Activated CD8-positive, alpha-beta memory T cell treated with anti-CD3 and anti-CD28 coated beads, Interleukin-2, amount 10 ng/mL, durations not matched to agents 7 days and 5 days (primary cell): ENCODE measurements at regions of chr19 and their contacts with region 1.

Region 1: DNA sequence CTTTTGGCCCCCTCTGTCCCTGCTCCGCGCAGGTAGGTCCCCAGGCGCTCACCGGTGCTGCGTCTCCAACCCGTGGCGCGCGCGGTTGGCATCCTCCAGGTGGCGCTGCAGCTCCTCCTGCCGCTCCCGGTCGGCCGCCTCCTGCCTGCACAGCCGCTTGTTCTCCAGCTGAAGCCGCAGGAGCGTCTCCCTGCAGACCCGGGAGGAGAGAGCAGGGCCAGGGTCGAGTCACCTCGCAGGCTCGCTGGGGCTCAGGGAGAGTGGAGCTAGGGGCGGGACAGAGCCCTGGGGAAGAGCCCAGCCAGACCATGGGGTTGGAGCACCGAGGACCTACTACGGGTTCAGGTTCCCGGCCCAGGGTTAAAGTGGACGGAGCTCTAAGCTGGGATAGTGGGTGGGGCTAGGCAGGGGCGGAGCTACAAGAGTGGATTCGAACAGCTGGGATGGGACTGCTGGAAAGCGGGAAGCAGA is 9.3 kb downstream of the HOOK2 start:
- DNase-seq: peak; percentile 87
- ATAC-seq: peak; percentile 87
- H3K4me3 Mint-ChIP-seq: peak overlapping the region; percentile 24
- H3K27ac Mint-ChIP-seq: no peak overlapping the region
- H3K4me1 Mint-ChIP-seq: peaks cover 9% of the 10 kb centered on the region
- H3K27me3 Mint-ChIP-seq: no peaks in the 10 kb centered on the region

Region 2: DNA sequence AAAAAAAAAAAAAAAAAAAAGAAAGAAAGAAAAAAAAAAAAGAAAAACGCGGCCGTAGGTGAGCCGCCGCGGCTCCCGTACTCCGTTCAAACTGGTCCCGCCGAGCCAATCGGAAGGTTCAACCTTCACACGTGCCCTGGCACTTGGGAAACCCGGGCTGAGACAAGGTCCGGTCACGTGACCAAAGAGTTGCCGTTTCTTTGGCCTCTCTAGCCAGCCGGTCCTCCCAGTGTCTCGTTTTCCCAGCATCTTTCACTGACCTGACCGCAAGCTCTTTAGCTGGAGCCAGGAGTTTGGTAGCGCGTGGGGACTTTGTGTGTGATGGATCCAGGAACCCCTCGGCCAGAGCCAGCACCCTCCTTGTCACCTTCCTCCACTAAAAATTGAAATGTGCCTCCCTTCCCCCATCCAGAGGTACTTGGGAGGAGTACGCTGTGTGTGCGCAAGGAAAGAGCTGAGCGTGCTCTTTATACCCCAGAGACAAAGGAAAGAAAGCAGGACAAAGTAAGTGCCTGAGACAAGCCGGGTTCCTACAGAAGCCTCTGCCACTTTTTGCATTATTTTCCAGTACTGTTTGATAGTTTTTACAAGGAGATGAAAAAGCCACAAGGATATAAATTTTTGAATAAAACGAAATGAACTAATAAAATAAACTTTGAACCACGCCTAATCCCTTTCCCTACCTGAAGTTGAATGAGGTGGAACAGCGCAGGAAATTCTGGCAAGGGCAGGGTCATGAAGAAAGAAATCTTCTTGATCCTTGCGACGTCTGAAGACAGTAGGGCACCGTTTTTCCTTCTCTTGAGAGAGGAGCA is 43.3 kb before region 1 on chr19:
- CTCF ChIA-PET with region 1: interaction called, 157 read pairs
- DNase-seq: peak; percentile 98
- ATAC-seq: peak; percentile 88
- H3K4me3 Mint-ChIP-seq: peak overlapping the region; percentile 83
- H3K27ac Mint-ChIP-seq: peak overlapping the region; percentile 91
- H3K4me1 Mint-ChIP-seq: peaks cover 38% of the 10 kb centered on the region
- H3K27me3 Mint-ChIP-seq: no peaks in the 10 kb centered on the region

Region 3: GRCh38 chr19:12749938-12750521 is 16.1 kb before region 1 on chr19:
- CTCF ChIA-PET with region 1: interaction called, 132 read pairs
- DNase-seq: no peak
- ATAC-seq: no peak
- H3K4me3 Mint-ChIP-seq: no peak overlapping the region
- H3K27ac Mint-ChIP-seq: no peak overlapping the region
- H3K4me1 Mint-ChIP-seq: peaks cover 3% of the 10 kb centered on the region
- H3K27me3 Mint-ChIP-seq: peaks cover 12% of the 10 kb centered on the region

Region 4: GRCh38 chr19:12825254-12826131 is 59.4 kb after region 1 on chr19:
- CTCF ChIA-PET with region 1: interaction called, 14 read pairs
- DNase-seq: no peak
- ATAC-seq: no peak
- H3K4me3 Mint-ChIP-seq: no peak overlapping the region
- H3K27ac Mint-ChIP-seq: no peak overlapping the region
- H3K4me1 Mint-ChIP-seq: peaks cover 11% of the 10 kb centered on the region
- H3K27me3 Mint-ChIP-seq: peaks cover 37% of the 10 kb centered on the region